B cell (primary cell): ENCODE measurements at regions of chr20 and their contacts with region 1.

Region 1: GRCh38 chr20:37192137-37192854 is 12.9 kb upstream of the MROH8 start:
- DNase-seq: peak; percentile 75
- ATAC-seq: peak; percentile 82
- H3K4me3 ChIP-seq: no peak overlapping the region
- H3K4me3 Mint-ChIP-seq: no peak overlapping the region
- H3K27ac ChIP-seq: no peak overlapping the region
- H3K27ac Mint-ChIP-seq: no peak overlapping the region
- H3K4me1 ChIP-seq: peaks cover 18 to 37% of the 10 kb centered on the region in 2 donors
- H3K4me1 Mint-ChIP-seq: peaks cover 50% of the 10 kb centered on the region
- H3K27me3 ChIP-seq: no peaks in the 10 kb centered on the region
- H3K27me3 Mint-ChIP-seq: no peaks in the 10 kb centered on the region
- CTCF ChIP-seq: peak; percentile 97

Region 2: GRCh38 chr20:36847009-36847709 is 345.1 kb before region 1 on chr20:
- CTCF ChIA-PET with region 1: no interaction called
- POLR2A ChIA-PET with region 1: no interaction called
- intact Hi-C with region 1: no loop called
- DNase-seq: no peak
- ATAC-seq: no peak
- H3K4me3 ChIP-seq: no peak overlapping the region
- H3K4me3 Mint-ChIP-seq: peak overlapping the region; percentile 11
- H3K27ac ChIP-seq: peak overlapping the region; percentile 97 to 98
- H3K27ac Mint-ChIP-seq: peak overlapping the region; percentile 96
- H3K4me1 ChIP-seq: peaks cover 82 to 95% of the 10 kb centered on the region in 2 donors
- H3K4me1 Mint-ChIP-seq: peaks cover 80% of the 10 kb centered on the region
- H3K27me3 ChIP-seq: no peaks in the 10 kb centered on the region
- H3K27me3 Mint-ChIP-seq: no peaks in the 10 kb centered on the region
- CTCF ChIP-seq: no peak

Region 3: GRCh38 chr20:37172836-37173235 is 19.5 kb before region 1 on chr20:
- CTCF ChIA-PET with region 1: interaction called, 79 read pairs
- POLR2A ChIA-PET with region 1: interaction called, 8 read pairs
- intact Hi-C with region 1: loop called (anchors 1 kb)
- DNase-seq: no peak
- ATAC-seq: no peak
- H3K4me3 ChIP-seq: no peak overlapping the region
- H3K4me3 Mint-ChIP-seq: no peak overlapping the region
- H3K27ac ChIP-seq: no peak overlapping the region
- H3K27ac Mint-ChIP-seq: no peak overlapping the region
- H3K4me1 ChIP-seq: peaks cover 2 to 4% of the 10 kb centered on the region in 2 donors
- H3K4me1 Mint-ChIP-seq: peaks cover 1% of the 10 kb centered on the region
- H3K27me3 ChIP-seq: no peaks in the 10 kb centered on the region
- H3K27me3 Mint-ChIP-seq: no peaks in the 10 kb centered on the region
- CTCF ChIP-seq: no peak

Region 4: DNA sequence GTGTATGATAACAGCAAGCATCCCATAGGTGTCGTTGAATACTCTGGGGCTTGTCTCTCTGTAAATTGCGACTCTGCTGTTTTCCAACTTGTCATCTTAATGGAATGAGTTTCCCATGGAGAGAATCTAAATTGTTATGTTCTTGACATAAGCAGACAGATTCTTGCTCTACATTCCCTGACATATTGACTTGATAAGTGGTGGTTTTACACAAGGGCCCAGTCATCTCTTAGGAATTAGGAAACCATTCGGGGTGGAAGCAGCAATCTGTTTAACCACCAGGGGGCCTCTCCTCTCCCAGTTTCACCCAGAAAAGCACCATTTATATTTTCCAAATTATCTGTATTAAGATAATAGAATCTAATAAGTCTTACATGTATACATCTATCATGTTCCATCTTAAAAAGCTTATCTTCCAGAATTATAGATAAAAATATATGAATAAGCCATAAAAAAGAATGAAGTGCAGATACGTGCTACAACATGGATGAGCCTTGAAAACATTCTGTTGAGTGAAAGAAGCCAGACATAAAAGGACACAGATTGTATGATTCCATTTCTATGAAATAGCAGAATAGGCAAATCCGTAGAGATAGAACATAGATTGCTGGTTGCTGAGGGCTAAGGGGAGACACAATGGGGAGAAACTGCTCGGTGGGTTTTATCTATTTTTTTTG is 10.1 kb after region 1 on chr20:
- CTCF ChIA-PET with region 1: interaction called, 19 read pairs
- POLR2A ChIA-PET with region 1: no interaction called
- intact Hi-C with region 1: no loop called
- DNase-seq: peak; percentile 56
- ATAC-seq: peak; percentile 58
- H3K4me3 ChIP-seq: no peak overlapping the region
- H3K4me3 Mint-ChIP-seq: no peak overlapping the region
- H3K27ac ChIP-seq: no peak overlapping the region
- H3K27ac Mint-ChIP-seq: no peak overlapping the region
- H3K4me1 ChIP-seq: no peaks in the 10 kb centered on the region
- H3K4me1 Mint-ChIP-seq: no peaks in the 10 kb centered on the region
- H3K27me3 ChIP-seq: no peaks in the 10 kb centered on the region
- H3K27me3 Mint-ChIP-seq: no peaks in the 10 kb centered on the region
- CTCF ChIP-seq: peak; percentile 85

Region 5: DNA sequence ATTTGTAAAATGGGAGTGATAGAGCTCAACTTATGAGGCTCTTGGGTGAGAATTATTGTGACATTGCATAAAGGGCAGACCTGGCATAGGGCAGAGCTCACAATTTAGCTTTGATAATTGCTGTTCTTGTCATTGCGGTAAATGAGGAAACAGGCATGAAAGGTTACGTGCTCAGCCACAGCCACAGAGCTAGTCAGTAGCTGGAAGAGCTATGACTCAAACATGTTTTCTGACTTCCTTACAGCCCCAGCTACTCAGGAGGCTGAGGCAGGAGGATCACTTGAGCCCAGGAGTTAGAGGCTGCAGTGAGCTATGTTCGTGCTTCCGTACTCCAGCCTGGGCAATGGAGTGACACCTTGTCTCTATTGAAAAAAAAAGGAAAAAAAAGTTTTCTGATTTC is 72.9 kb after region 1 on chr20:
- CTCF ChIA-PET with region 1: interaction called, 17 read pairs
- POLR2A ChIA-PET with region 1: no interaction called
- intact Hi-C with region 1: no loop called
- DNase-seq: peak; percentile 54
- ATAC-seq: peak; percentile 75
- H3K4me3 ChIP-seq: no peak overlapping the region
- H3K4me3 Mint-ChIP-seq: no peak overlapping the region
- H3K27ac ChIP-seq: no peak overlapping the region
- H3K27ac Mint-ChIP-seq: no peak overlapping the region
- H3K4me1 ChIP-seq: peaks cover 10 to 17% of the 10 kb centered on the region in 2 donors
- H3K4me1 Mint-ChIP-seq: peaks cover 13% of the 10 kb centered on the region
- H3K27me3 ChIP-seq: no peaks in the 10 kb centered on the region
- H3K27me3 Mint-ChIP-seq: peaks cover 12% of the 10 kb centered on the region
- CTCF ChIP-seq: no peak

Region 6: GRCh38 chr20:37534401-37535157 is 342.3 kb after region 1 on chr20:
- CTCF ChIA-PET with region 1: interaction called, 307 read pairs
- POLR2A ChIA-PET with region 1: no interaction called
- intact Hi-C with region 1: loop called (anchors 1 kb)
- DNase-seq: peak; percentile 91
- ATAC-seq: peak; percentile 98
- H3K4me3 ChIP-seq: no peak overlapping the region
- H3K4me3 Mint-ChIP-seq: no peak overlapping the region
- H3K27ac ChIP-seq: peak overlapping the region; percentile 2 to 71
- H3K27ac Mint-ChIP-seq: peak overlapping the region; percentile 87
- H3K4me1 ChIP-seq: peaks cover 4 to 5% of the 10 kb centered on the region in 2 donors
- H3K4me1 Mint-ChIP-seq: peaks cover 12% of the 10 kb centered on the region
- H3K27me3 ChIP-seq: no peaks in the 10 kb centered on the region
- H3K27me3 Mint-ChIP-seq: peaks cover 12% of the 10 kb centered on the region
- CTCF ChIP-seq: peak; percentile 84